Right ventricle myocardium inferior (tissue), 1 donor: ENCODE measurements at regions of chr10 and their contacts with region 1.

Region 1: GRCh38 chr10:112949875-112950507 is at the start of gene TCF7L2:
- DNase-seq: peak; percentile 99
- ATAC-seq: peak; percentile 95
- total RNA-seq, gene TCF7L2: 12.4 TPM

Region 2: GRCh38 chr10:113007032-113007771 is 57.2 kb after region 1 on chr10:
- intact Hi-C with region 1: no loop called
- DNase-seq: no peak
- ATAC-seq: no peak

Region 3: DNA sequence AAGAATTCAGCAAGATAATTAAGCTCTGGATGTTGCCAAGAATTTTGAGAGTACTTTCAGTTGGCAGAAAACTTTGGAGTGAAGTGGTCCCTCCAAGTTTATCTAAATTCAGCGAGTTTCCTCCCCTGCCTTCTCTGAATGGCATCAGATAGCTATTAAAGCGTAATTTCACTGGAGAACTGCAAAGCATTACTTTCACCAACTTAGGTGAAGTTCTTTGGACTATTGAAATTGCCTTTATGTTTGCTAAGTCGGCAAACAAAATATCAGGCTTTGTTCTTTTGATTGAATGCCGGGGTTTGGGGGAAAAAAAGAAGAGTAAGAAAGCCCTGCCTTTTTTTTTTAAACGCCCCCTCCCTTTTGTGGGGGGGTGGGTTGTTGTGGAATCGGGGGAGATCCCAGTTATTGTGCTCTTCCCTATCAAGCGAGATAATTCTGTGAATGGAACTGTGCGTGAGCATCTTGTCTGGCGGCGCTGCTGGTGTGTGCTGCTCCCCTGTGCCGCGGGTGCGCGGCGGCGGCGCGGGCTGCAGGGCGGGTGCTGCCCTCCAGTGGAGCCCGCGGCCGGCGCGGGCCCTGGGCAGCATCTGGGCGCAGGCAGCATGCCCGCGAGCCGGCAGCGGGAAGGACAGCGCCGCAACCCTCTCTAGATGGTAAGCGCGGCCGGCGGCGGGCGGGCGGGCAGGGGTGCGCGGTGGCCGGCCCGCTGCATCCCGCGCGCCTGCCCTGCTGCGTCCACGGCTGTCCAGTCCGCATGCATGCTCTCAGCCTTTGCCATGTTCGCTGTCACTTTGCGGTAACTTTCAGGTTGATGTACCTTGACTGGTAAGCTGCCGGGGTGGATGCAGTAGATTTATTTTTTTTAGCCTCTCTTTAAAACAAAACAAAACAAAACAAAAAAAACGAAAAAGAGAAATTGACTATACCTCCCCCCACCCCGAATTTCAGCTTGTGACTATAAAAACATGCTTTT is 176.5 kb after region 1 on chr10:
- intact Hi-C with region 1: loop called (anchors 2 kb)
- DNase-seq: peak; percentile 88
- ATAC-seq: peak; percentile 95

Region 4: DNA sequence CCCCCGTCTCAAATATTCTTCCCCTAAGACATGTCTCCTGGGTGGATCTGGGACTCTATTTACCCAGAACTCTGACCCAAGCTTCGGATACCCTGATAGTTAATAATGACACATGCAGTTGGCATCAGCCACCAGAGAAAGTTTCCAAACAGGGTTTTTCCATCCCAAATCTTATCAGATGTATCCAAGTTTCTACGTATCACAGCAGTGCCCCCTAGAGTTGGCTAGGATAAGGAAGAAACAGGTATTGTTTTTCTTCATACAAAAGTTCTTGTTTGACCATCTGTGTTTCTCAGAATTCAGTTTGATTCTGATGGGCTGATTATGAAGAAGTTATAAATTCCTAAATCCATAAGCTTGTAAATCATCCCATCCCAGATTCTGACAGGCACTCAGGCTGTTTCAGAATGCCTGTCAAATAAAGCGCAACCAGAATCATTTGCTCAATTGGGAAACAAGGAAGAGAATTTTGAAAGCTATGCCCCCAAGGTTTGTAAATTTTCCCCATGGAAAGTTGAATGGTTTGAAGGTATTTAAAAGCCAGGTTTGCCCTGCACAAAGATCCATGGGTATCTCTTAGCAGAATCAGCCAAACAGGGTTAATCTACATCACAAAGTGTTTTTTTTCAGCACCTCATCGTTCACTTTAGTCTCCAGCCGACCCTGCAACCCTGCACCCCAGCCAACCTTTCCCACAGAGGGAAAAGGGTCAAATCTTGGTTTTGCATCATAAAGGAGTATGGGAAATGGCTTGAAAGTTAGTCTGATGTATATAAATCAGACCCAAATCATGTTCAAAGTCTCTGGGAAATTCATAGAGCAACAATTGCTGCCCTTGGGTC is 666.5 kb after region 1 on chr10:
- intact Hi-C with region 1: no loop called
- DNase-seq: no peak
- ATAC-seq: no peak